ENCODE measurements at regions of chr3 and their contacts with region 1.

Region 1: GRCh38 chr3:63993653-63994079 is 29.6 kb downstream of the PSMD6 start:
- DNase-seq: peak; percentile 72
- ATAC-seq: peak; percentile 98
- H3K4me3 Mint-ChIP-seq: no peak overlapping the region
- H3K27ac Mint-ChIP-seq: no peak overlapping the region; the same call in 1 of the 2 replicates
- H3K4me1 Mint-ChIP-seq: peaks cover 15% of the 10 kb centered on the region
- H3K27me3 Mint-ChIP-seq: no peaks in the 10 kb centered on the region
- CTCF ChIP-seq: peak; percentile 73

Region 2: GRCh38 chr3:63914312-63914873 is 79.3 kb before region 1 on chr3:
- CTCF ChIA-PET with region 1: no interaction called
- POLR2A ChIA-PET with region 1: no interaction called
- DNase-seq: no peak
- ATAC-seq: no peak
- H3K4me3 Mint-ChIP-seq: peak overlapping the region; percentile 4; the same call in 1 of the 2 replicates
- H3K27ac Mint-ChIP-seq: no peak overlapping the region
- H3K4me1 Mint-ChIP-seq: peaks cover 29% of the 10 kb centered on the region
- H3K27me3 Mint-ChIP-seq: peaks cover 3% of the 10 kb centered on the region; the same call in 1 of the 2 replicates
- CTCF ChIP-seq: no peak

Region 3: GRCh38 chr3:63961891-63962290 is 31.8 kb before region 1 on chr3:
- CTCF ChIA-PET with region 1: interaction called, 36 read pairs
- POLR2A ChIA-PET with region 1: no interaction called
- DNase-seq: no peak
- ATAC-seq: peak; percentile 63
- H3K4me3 Mint-ChIP-seq: no peak overlapping the region
- H3K27ac Mint-ChIP-seq: no peak overlapping the region
- H3K4me1 Mint-ChIP-seq: peaks cover 53% of the 10 kb centered on the region
- H3K27me3 Mint-ChIP-seq: no peaks in the 10 kb centered on the region
- CTCF ChIP-seq: peak; percentile 27

Region 4: GRCh38 chr3:63972196-63972595 is 21.5 kb before region 1 on chr3:
- CTCF ChIA-PET with region 1: interaction called, 13 read pairs
- POLR2A ChIA-PET with region 1: no interaction called
- DNase-seq: no peak
- ATAC-seq: no peak
- H3K4me3 Mint-ChIP-seq: no peak overlapping the region
- H3K27ac Mint-ChIP-seq: peak overlapping the region; percentile 29
- H3K4me1 Mint-ChIP-seq: peaks cover 63% of the 10 kb centered on the region
- H3K27me3 Mint-ChIP-seq: no peaks in the 10 kb centered on the region
- CTCF ChIP-seq: no peak

Region 5: DNA sequence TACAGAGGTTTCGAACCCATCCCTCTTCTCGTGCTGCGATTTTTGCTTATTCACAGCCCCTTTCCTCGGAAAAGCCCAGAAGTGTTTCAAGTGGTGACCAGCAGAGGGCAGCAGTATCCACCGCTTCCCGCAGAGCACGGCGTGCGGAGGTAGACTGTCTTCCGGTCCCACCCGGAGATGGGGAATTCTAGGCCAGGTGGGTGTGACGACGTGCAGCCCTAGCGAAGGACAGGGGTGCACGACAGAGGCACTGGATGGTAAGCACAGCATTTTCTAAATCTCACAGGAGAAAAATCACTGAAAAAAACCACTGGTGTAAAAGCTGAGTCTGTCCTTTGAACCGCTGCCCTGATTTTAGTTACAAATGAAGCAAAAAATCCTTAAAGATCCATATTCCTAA is 37.1 kb after region 1 on chr3:
- CTCF ChIA-PET with region 1: no interaction called
- POLR2A ChIA-PET with region 1: no interaction called
- DNase-seq: peak; percentile 88
- ATAC-seq: peak; percentile 95
- H3K4me3 Mint-ChIP-seq: peak overlapping the region; percentile 31
- H3K27ac Mint-ChIP-seq: peak overlapping the region; percentile 5; the same call in 1 of the 2 replicates
- H3K4me1 Mint-ChIP-seq: peaks cover 31% of the 10 kb centered on the region
- H3K27me3 Mint-ChIP-seq: no peaks in the 10 kb centered on the region
- CTCF ChIP-seq: peak; percentile 73

Region 6: DNA sequence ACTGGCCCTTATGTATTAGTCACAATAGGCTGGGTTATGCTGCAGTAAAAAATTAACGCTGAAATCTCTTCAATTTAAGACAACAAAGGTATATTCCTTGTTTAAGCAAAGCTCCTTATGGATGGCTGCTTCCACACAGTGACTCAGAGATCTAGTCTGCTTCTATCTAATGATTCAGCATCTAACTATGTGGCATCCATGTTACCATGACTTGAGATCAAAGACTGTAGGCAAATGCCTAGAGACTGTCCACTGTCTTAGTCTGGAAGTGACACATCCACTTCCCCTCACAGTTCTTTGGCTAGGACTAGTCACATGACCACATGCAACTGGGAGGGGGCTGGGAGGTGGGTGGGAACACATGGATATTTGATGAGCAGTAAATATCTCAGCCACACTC is 91.0 kb after region 1 on chr3:
- CTCF ChIA-PET with region 1: no interaction called
- POLR2A ChIA-PET with region 1: no interaction called
- DNase-seq: no peak
- ATAC-seq: no peak
- H3K4me3 Mint-ChIP-seq: no peak overlapping the region
- H3K27ac Mint-ChIP-seq: no peak overlapping the region
- H3K4me1 Mint-ChIP-seq: peaks cover 40% of the 10 kb centered on the region
- H3K27me3 Mint-ChIP-seq: no peaks in the 10 kb centered on the region; the same call in 1 of the 2 replicates
- CTCF ChIP-seq: no peak

Region 7: DNA sequence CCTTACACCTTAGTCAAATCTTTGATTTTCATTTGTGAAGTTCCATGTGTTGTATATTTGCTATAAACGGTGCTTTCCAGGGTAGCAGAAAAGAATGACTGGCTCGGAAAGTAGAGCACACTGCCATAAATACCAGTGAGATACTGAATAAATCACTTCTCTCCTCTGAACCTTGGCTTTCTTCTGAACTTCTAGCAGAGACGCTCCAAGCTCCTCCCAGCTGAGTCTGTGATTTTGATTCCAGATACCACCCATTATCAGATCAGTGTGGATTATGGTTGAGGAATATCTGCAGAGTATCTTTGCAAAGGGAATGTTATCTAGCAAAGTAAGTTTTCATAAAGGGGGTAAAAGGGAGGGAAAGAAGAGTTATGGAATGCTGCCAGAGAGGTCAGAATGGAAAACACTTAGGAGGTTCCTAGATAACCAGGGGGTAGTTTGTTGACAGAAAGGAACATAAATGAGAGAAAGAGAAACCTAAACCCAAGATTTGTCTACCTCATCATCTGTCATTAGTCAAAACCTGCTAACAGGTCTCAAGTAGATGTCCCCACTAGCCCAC is 128.2 kb after region 1 on chr3:
- CTCF ChIA-PET with region 1: no interaction called
- POLR2A ChIA-PET with region 1: no interaction called
- DNase-seq: no peak
- ATAC-seq: no peak
- H3K4me3 Mint-ChIP-seq: no peak overlapping the region
- H3K27ac Mint-ChIP-seq: no peak overlapping the region
- H3K4me1 Mint-ChIP-seq: no peaks in the 10 kb centered on the region
- H3K27me3 Mint-ChIP-seq: no peaks in the 10 kb centered on the region
- CTCF ChIP-seq: no peak